WTC11 (cell line): ENCODE measurements at regions of chr5 and their contacts with region 1.

Region 1: DNA sequence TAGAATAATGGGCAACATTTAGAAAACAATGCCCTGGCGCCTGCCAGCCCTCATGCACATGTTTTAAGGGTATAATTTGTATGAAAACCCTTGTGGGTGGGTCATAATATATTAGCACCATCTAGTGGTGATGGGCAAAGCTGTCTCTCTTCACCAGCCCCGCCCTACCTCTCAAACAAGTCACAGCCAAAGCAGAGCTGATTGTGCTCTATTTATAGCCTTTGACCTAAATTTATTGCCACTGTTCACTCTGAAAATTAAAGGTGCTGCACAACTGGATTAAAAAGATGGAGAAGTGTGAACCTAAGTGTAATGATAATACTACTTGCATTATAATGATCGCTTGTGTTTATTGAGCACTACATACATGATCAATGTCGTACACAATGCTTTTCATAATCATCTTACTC is 131.9 kb upstream of the ANKH start:
- DNase-seq: peak; percentile 36
- ATAC-seq: peak; percentile 88
- H3K4me3 Mint-ChIP-seq: no peak overlapping the region
- H3K27ac Mint-ChIP-seq: no peak overlapping the region
- H3K4me1 Mint-ChIP-seq: peaks cover 3% of the 10 kb centered on the region
- H3K27me3 Mint-ChIP-seq: no peaks in the 10 kb centered on the region; the same call in 1 of the 2 replicates
- CTCF ChIP-seq: peak; percentile 44; the same call in 1 of the 2 replicates

Region 2: DNA sequence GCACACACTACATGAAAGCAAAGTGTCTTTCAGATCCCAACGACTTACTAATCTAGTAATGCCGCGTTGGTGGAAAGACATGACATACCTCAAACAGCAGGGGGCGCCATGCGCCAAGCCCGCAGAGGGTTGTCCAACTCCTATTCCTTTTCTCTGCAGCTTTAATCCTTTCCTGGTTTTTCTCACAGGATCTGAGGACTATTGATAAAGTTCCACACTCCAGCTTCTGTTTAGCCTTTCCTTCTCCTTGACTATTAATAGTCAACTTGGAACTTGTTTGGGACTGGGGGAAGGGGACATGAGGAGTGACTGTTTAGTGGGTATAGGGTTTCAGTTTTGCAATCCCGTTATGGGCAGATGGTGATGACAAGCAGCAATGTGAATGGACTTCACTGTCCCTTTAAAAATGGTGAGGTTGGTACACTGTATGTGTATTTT is 276.1 kb before region 1 on chr5:
- CTCF ChIA-PET with region 1: interaction called, 52 read pairs
- POLR2A ChIA-PET with region 1: no interaction called
- DNase-seq: peak; percentile 82
- ATAC-seq: peak; percentile 8
- H3K4me3 Mint-ChIP-seq: no peak overlapping the region
- H3K27ac Mint-ChIP-seq: peak overlapping the region; percentile 69; the same call in 1 of the 2 replicates
- H3K4me1 Mint-ChIP-seq: peaks cover 36% of the 10 kb centered on the region
- H3K27me3 Mint-ChIP-seq: no peaks in the 10 kb centered on the region; the same call in 1 of the 2 replicates
- CTCF ChIP-seq: peak; percentile 77

Region 3: GRCh38 chr5:14988223-14988622 is 15.3 kb before region 1 on chr5:
- CTCF ChIA-PET with region 1: no interaction called
- POLR2A ChIA-PET with region 1: no interaction called
- DNase-seq: no peak
- ATAC-seq: no peak
- H3K4me3 Mint-ChIP-seq: no peak overlapping the region
- H3K27ac Mint-ChIP-seq: no peak overlapping the region
- H3K4me1 Mint-ChIP-seq: no peaks in the 10 kb centered on the region
- H3K27me3 Mint-ChIP-seq: no peaks in the 10 kb centered on the region; the same call in 1 of the 2 replicates
- CTCF ChIP-seq: no peak

Region 4: DNA sequence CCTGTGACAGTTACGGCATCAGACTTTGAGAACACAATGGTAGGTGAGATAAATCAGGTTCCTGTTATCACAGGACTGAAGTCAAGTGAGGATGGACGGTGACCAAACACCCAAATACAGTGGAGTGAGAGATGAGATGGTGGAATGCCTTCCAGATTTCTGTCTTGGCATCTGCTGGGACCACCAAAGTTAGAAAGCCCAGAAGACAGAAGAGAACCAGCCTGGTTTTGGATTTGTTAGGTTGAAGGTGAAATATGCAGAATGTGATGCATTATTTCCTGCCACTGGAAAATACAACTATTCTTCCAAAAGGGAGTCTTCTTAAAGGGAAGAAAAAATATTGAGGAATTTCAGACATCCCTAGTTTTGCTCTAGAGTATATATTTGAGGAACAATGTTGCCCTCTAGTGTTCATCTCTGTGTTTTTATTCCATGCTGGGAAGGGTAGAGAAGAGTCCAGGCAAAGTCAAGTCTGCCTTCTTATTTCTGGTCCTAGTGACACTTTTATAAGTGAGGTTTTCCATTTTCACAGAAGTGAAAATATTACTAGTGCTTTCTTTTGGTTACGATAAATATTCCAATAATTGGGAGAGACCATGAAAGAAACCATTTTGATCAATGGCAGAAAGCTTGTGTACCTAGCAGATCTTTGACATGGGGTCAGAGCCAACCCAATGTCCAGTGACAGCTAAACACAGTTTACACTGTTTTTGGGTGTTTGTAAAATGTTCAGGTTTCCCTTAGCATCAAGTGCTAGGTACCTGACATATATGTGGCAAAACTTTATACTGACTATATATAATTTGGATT is 10.3 kb after region 1 on chr5:
- CTCF ChIA-PET with region 1: interaction called, 14 read pairs
- POLR2A ChIA-PET with region 1: no interaction called
- DNase-seq: no peak
- ATAC-seq: peak; percentile 90
- H3K4me3 Mint-ChIP-seq: no peak overlapping the region
- H3K27ac Mint-ChIP-seq: peak overlapping the region; percentile 34; the same call in 1 of the 2 replicates
- H3K4me1 Mint-ChIP-seq: peaks cover 11% of the 10 kb centered on the region
- H3K27me3 Mint-ChIP-seq: peaks cover 6% of the 10 kb centered on the region
- CTCF ChIP-seq: 0 out of 2 replicates have a peak, but pooled peaks have one; percentile 26

Region 5: GRCh38 chr5:15267966-15268365 is 264.4 kb after region 1 on chr5:
- CTCF ChIA-PET with region 1: no interaction called
- POLR2A ChIA-PET with region 1: no interaction called
- DNase-seq: no peak
- ATAC-seq: no peak
- H3K4me3 Mint-ChIP-seq: no peak overlapping the region
- H3K27ac Mint-ChIP-seq: no peak overlapping the region
- H3K4me1 Mint-ChIP-seq: peaks cover 26% of the 10 kb centered on the region
- H3K27me3 Mint-ChIP-seq: peaks cover 10% of the 10 kb centered on the region; the same call in 1 of the 2 replicates
- CTCF ChIP-seq: no peak